ENCODE measurements at regions of chr16 and their contacts with region 1.

Region 1: GRCh38 chr16:89330177-89330856 is 112.8 kb downstream of the ZNF778 start:
- DNase-seq: no peak
- H3K4me3 ChIP-seq: no peak overlapping the region
- H3K27ac ChIP-seq: no peak overlapping the region
- H3K4me1 ChIP-seq: peaks cover 27% of the 10 kb centered on the region
- H3K27me3 ChIP-seq: no peaks in the 10 kb centered on the region
- CTCF ChIP-seq: no peak

Region 2: DNA sequence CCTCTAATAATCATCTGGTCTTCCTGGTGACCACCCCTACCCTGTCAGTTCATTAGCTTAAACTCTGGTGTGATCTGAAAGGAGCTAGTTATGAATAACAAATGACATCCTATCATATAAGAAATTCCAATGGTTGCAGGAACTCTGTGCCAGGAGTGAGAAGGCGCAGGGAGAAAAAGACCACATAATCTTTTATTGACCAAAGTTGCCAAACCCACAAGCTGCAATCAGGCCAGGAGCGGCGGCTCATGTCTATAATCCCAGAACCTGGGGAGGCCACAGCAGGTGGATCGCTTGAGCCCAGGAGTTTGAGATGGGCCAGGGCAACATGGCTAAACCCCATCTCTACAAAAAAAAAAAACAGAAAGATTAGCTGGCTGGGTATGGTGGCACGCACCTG is 136.6 kb after region 1 on chr16:
- intact Hi-C with region 1: no loop called
- DNase-seq: no peak
- H3K4me3 ChIP-seq: no peak overlapping the region
- H3K27ac ChIP-seq: no peak overlapping the region
- H3K4me1 ChIP-seq: peaks cover 11% of the 10 kb centered on the region
- H3K27me3 ChIP-seq: no peaks in the 10 kb centered on the region
- CTCF ChIP-seq: no peak

Region 3: GRCh38 chr16:89511374-89511773 is 181.1 kb after region 1 on chr16:
- intact Hi-C with region 1: loop called (anchors 5 kb)
- DNase-seq: no peak
- H3K4me3 ChIP-seq: no peak overlapping the region
- H3K27ac ChIP-seq: no peak overlapping the region
- H3K4me1 ChIP-seq: peaks cover 11% of the 10 kb centered on the region
- H3K27me3 ChIP-seq: no peaks in the 10 kb centered on the region
- CTCF ChIP-seq: no peak

Region 4: DNA sequence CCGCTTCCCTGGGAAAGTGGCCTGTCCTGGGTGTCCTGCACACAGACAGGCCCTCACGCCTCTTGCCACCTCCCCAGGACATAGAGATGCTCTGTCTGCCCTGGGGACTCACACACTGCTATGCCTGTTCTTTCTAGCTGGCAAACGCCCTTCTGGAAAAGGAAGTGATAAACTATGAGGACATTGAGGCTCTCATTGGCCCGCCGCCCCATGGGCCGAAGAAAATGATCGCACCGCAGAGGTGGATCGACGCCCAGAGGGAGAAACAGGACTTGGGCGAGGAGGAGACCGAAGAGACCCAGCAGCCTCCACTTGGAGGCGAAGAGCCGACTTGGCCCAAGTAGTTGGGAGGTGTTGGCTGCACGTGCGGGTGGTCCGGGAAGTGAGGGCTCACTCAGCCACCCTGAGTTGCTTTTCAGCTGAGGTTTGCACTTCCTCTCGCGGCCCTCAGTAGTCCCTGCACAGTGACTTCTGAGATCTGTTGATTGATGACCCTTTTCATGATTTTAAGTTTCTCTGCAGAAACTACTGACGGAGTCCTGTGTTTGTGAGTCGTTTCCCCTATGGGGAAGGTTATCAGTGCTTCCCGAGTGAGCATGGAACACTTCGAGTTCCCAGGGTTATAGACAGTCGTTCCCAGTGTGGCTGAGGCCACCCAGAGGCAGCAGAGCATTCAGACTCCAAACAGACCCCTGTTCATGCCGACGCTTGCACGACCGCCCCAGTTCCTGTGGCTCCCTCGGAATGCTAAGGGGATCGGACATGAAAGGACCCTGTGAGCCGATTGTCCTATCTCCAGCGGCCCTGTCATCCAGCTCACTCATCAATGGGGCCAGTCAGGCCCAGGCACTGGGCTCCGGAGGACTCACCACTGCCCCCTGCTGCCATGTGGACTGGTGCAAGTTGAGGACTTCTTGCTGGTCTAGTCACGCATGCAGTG is 226.7 kb after region 1 on chr16:
- intact Hi-C with region 1: loop called (anchors 10 kb)
- DNase-seq: peak; percentile 89
- H3K4me3 ChIP-seq: no peak overlapping the region
- H3K27ac ChIP-seq: no peak overlapping the region
- H3K4me1 ChIP-seq: no peaks in the 10 kb centered on the region
- H3K27me3 ChIP-seq: no peaks in the 10 kb centered on the region
- CTCF ChIP-seq: peak; percentile 70

Region 5: GRCh38 chr16:89623511-89624261 is 293.4 kb after region 1 on chr16:
- intact Hi-C with region 1: no loop called
- DNase-seq: no peak
- H3K4me3 ChIP-seq: no peak overlapping the region
- H3K27ac ChIP-seq: no peak overlapping the region
- H3K4me1 ChIP-seq: no peaks in the 10 kb centered on the region
- H3K27me3 ChIP-seq: peaks cover 18% of the 10 kb centered on the region
- CTCF ChIP-seq: no peak